Head of caudate nucleus (tissue), 42 donors: ENCODE measurements at regions of chr6 and their contacts with region 1.

Region 1: DNA sequence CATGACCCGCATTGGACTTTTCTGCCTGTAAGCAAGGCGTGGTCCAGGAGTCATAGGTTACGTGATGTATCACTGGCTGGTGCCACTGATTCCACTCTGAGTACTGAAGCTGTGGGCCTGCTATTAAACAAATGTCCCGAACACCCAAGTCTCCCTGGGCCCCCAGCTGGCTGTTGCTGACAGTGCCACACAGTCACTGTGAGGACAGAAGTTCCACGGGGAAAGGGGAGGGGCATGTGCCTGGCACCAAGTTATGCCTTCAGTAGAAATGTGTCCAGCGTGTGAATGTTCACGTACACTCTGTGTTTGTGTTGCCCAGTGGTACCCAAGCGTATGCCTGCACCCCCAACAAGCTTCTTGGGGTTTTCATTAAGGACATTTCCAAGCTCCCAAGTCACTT is 171.4 kb upstream of the QKI start:
- DNase-seq: peak; percentile 79 to 97 (median 91)

Region 2: GRCh38 chr6:163199371-163199976 is 43.6 kb before region 1 on chr6:
- intact Hi-C with region 1: loop called (anchors 5 kb)
- DNase-seq: peak in 1 of 42 donors; percentile 40

Region 3: DNA sequence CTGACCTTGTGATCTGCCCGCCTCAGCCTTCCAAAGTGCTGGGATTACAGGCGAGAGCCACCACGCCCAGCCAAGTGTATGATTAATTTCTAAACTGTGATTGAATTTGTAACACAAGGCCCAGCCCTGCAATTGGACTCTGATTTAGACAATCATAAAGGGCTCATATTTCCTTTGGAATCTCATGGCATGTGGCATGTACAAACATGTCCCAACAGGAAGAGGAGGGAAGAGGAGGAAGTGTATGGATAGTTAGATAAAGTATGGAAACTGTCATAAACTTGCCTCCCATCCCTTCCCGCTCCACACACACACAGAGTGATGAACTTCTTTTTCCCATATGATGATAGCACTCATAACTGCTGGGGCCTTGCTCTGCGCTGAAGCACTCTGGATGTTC is 144.2 kb after region 1 on chr6:
- intact Hi-C with region 1: no loop called
- DNase-seq: no peak

Region 4: GRCh38 chr6:163965426-163966348 is 722.6 kb after region 1 on chr6:
- intact Hi-C with region 1: no loop called
- DNase-seq: peak in 1 of 42 donors; percentile 48